ENCODE measurements at regions of chr17 and their contacts with region 1.

Region 1: GRCh38 chr17:7982666-7983065 is 19.7 kb upstream of the GUCY2D start:
- DNase-seq: peak; percentile 33
- H3K4me3 ChIP-seq: no peak overlapping the region
- H3K27ac ChIP-seq: no peak overlapping the region
- H3K4me1 ChIP-seq: peaks cover 4% of the 10 kb centered on the region
- H3K27me3 ChIP-seq: no peaks in the 10 kb centered on the region
- CTCF ChIP-seq: peak in 1 of 2 donors; percentile 8
- POLR2A ChIP-seq: no peak

Region 2: DNA sequence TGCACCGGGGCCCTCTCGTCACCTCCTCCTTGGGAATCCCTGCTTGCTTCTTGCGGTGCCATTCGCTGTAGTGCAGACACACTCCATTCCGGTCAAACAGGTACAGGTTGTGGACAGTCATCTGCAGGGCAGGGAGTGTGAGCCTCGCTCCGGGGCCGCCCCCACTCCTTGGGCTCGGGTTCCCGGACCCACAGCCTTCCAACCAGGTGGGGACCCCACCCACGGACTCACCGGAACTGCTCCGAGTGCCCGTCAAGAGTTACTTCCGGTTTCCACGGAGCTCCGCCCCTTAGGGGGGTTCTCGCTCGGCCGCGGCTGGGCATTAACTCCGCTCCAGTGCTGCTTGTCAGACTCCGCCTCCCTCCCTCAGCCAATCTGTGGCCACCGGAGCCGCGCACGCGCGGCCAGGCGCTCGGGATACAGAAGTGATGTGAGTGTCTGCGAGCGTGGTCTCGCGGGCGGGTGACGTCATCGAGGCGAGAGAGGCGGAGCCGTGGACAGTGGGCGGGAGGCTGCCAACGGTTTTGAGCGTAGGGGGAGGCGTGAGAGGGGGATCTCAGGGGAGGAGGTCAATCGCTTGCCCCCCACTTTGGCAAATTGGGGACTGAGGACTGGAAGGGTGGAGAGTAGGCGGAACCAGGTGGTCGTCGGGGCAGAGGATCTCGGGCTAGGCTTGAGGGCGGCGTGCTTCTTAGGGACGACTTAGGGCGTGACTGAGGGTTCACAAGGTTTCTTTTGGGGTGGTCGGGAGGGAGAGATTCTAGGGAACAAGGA is 50.8 kb before region 1 on chr17 and contains the starts of genes CNTROB and TRAPPC1:
- CTCF ChIA-PET with region 1: interaction called, 13 read pairs
- POLR2A ChIA-PET with region 1: no interaction called
- dilution Hi-C with region 1: no loop called
- intact Hi-C with region 1: no loop called
- DNase-seq: peak; percentile 99
- H3K4me3 ChIP-seq: peak within 1 kb of the TSS; percentile 74 to 98 (median 96)
- H3K27ac ChIP-seq: peak within 1 kb of the TSS; percentile 66
- H3K4me1 ChIP-seq: peaks cover 23% of the 10 kb centered on the region
- H3K27me3 ChIP-seq: no peaks in the 10 kb centered on the region
- CTCF ChIP-seq: no peak
- POLR2A ChIP-seq: no peak
- total RNA-seq, gene CNTROB: 45.0 and 47.2 TPM in 2 replicates
- total RNA-seq, gene TRAPPC1: 139 and 146 TPM in 2 replicates

Region 3: GRCh38 chr17:7972131-7972785 is 10.4 kb before region 1 on chr17:
- CTCF ChIA-PET with region 1: interaction called, 11 read pairs
- POLR2A ChIA-PET with region 1: no interaction called
- dilution Hi-C with region 1: no loop called
- intact Hi-C with region 1: no loop called
- DNase-seq: no peak
- H3K4me3 ChIP-seq: no peak overlapping the region
- H3K27ac ChIP-seq: no peak overlapping the region
- H3K4me1 ChIP-seq: no peaks in the 10 kb centered on the region
- H3K27me3 ChIP-seq: peaks cover 0 to 2% of the 10 kb centered on the region in 2 experiments
- CTCF ChIP-seq: peak in 1 of 2 donors; percentile 6
- POLR2A ChIP-seq: no peak

Region 4: GRCh38 chr17:8189711-8190477 is 207.2 kb after region 1 on chr17 and contains the start of gene BORCS6:
- CTCF ChIA-PET with region 1: no interaction called
- POLR2A ChIA-PET with region 1: no interaction called
- dilution Hi-C with region 1: no loop called
- intact Hi-C with region 1: no loop called
- DNase-seq: peak; percentile 98
- H3K4me3 ChIP-seq: peak within 1 kb of the TSS; percentile 45 to 66 (median 49)
- H3K27ac ChIP-seq: peak within 1 kb of the TSS; percentile 65
- H3K4me1 ChIP-seq: peaks cover 27% of the 10 kb centered on the region
- H3K27me3 ChIP-seq: no peaks in the 10 kb centered on the region
- CTCF ChIP-seq: peak in 1 of 2 donors; percentile 5
- POLR2A ChIP-seq: no peak
- total RNA-seq, gene BORCS6: 8.3 and 9.0 TPM in 2 replicates

Measured in endothelial cell of umbilical vein (primary cell).